GM12878 (cell line): ENCODE measurements at regions of chr11 and their contacts with region 1.

Region 1: GRCh38 chr11:34149786-34150185 is 44.4 kb downstream of the NAT10 start:
- DNase-seq: no peak
- ATAC-seq: no peak
- H3K4me3 ChIP-seq: no peak overlapping the region
- H3K27ac ChIP-seq: no peak overlapping the region
- H3K4me1 ChIP-seq: peaks cover 42% of the 10 kb centered on the region
- H3K27me3 ChIP-seq: no peaks in the 10 kb centered on the region
- CTCF ChIP-seq: peak in 2 of 3 experiments; percentile 25 to 27; a peak in 2 of 6 replicates
- EP300 ChIP-seq: no peak
- POLR2A ChIP-seq: no peak
- RAD21 ChIP-seq: 0 out of 2 replicates have a peak, but pooled peaks have one; percentile 24

Region 2: GRCh38 chr11:33819278-33819677 is 330.5 kb before region 1 on chr11:
- CTCF ChIA-PET with region 1: no interaction called
- POLR2A ChIA-PET with region 1: no interaction called
- RAD21 ChIA-PET with region 1: no interaction called
- SMC1A ChIA-PET with region 1: no interaction called
- in situ Hi-C with region 1: no loop called
- intact Hi-C with region 1: no loop called
- DNase-seq: no peak
- ATAC-seq: no peak
- H3K4me3 ChIP-seq: no peak overlapping the region
- H3K27ac ChIP-seq: no peak overlapping the region
- H3K4me1 ChIP-seq: no peaks in the 10 kb centered on the region
- H3K27me3 ChIP-seq: peaks cover 3 to 6% of the 10 kb centered on the region in 2 experiments; a peak in 3 of 4 replicates
- CTCF ChIP-seq: no peak
- EP300 ChIP-seq: no peak
- POLR2A ChIP-seq: no peak
- RAD21 ChIP-seq: no peak

Region 3: GRCh38 chr11:34002268-34002807 is 147.4 kb before region 1 on chr11:
- CTCF ChIA-PET with region 1: interaction called, 3 read pairs
- POLR2A ChIA-PET with region 1: no interaction called
- RAD21 ChIA-PET with region 1: no interaction called
- SMC1A ChIA-PET with region 1: no interaction called
- in situ Hi-C with region 1: no loop called
- intact Hi-C with region 1: loop called (anchors 5 kb)
- DNase-seq: no peak
- ATAC-seq: no peak
- H3K4me3 ChIP-seq: no peak overlapping the region
- H3K27ac ChIP-seq: no peak overlapping the region
- H3K4me1 ChIP-seq: peaks cover 25% of the 10 kb centered on the region
- H3K27me3 ChIP-seq: no peaks in the 10 kb centered on the region; a peak in 2 of 4 replicates
- CTCF ChIP-seq: no peak
- EP300 ChIP-seq: no peak
- POLR2A ChIP-seq: no peak
- RAD21 ChIP-seq: no peak

Region 4: GRCh38 chr11:34134765-34135164 is 15.0 kb before region 1 on chr11:
- CTCF ChIA-PET with region 1: interaction called, 3 read pairs
- POLR2A ChIA-PET with region 1: interaction called, 16 read pairs
- RAD21 ChIA-PET with region 1: interaction called, 14 read pairs
- SMC1A ChIA-PET with region 1: interaction called, 7 read pairs
- in situ Hi-C with region 1: no loop called
- intact Hi-C with region 1: no loop called
- DNase-seq: peak; percentile 26
- ATAC-seq: peak; percentile 84
- H3K4me3 ChIP-seq: no peak overlapping the region
- H3K27ac ChIP-seq: peak overlapping the region; percentile 1; the same call in 1 of the 2 replicates
- H3K4me1 ChIP-seq: peaks cover 9% of the 10 kb centered on the region
- H3K27me3 ChIP-seq: no peaks in the 10 kb centered on the region
- CTCF ChIP-seq: no peak
- EP300 ChIP-seq: no peak
- POLR2A ChIP-seq: no peak
- RAD21 ChIP-seq: no peak